Activated CD8-positive, alpha-beta T cell treated with anti-CD3 and anti-CD28 coated beads for 36 hours (primary cell): ENCODE measurements at regions of chr9 and their contacts with region 1.

Region 1: GRCh38 chr9:133406480-133407307 is 11.1 kb downstream of the REXO4 start:
- DNase-seq: peak; percentile 89
- ATAC-seq: peak; percentile 96
- H3K4me3 Mint-ChIP-seq: no peak overlapping the region
- H3K27ac Mint-ChIP-seq: peak overlapping the region; percentile 78
- H3K4me1 Mint-ChIP-seq: peaks cover 11% of the 10 kb centered on the region
- H3K27me3 Mint-ChIP-seq: no peaks in the 10 kb centered on the region
- CTCF ChIP-seq: peak; percentile 88

Region 2: GRCh38 chr9:133417541-133418461 is 11.1 kb after region 1 on chr9 and contains the start of gene REXO4:
- CTCF ChIA-PET with region 1: interaction called, 12 read pairs
- POLR2A ChIA-PET with region 1: interaction called, 7 read pairs
- intact Hi-C with region 1: no loop called
- DNase-seq: peak; percentile 89
- ATAC-seq: peak; percentile 78
- H3K4me3 Mint-ChIP-seq: peak within 1 kb of the TSS; percentile 93
- H3K27ac Mint-ChIP-seq: peak within 1 kb of the TSS; percentile 95
- H3K4me1 Mint-ChIP-seq: peaks cover 60% of the 10 kb centered on the region
- H3K27me3 Mint-ChIP-seq: no peaks in the 10 kb centered on the region
- CTCF ChIP-seq: no peak
- total RNA-seq, gene REXO4: 35.3 to 36.7 TPM

Region 3: GRCh38 chr9:133437753-133438531 is 31.2 kb after region 1 on chr9:
- CTCF ChIA-PET with region 1: no interaction called
- POLR2A ChIA-PET with region 1: no interaction called
- intact Hi-C with region 1: no loop called
- DNase-seq: no peak
- ATAC-seq: no peak
- H3K4me3 Mint-ChIP-seq: no peak overlapping the region
- H3K27ac Mint-ChIP-seq: no peak overlapping the region
- H3K4me1 Mint-ChIP-seq: peaks cover 5% of the 10 kb centered on the region
- H3K27me3 Mint-ChIP-seq: no peaks in the 10 kb centered on the region
- CTCF ChIP-seq: no peak

Region 4: DNA sequence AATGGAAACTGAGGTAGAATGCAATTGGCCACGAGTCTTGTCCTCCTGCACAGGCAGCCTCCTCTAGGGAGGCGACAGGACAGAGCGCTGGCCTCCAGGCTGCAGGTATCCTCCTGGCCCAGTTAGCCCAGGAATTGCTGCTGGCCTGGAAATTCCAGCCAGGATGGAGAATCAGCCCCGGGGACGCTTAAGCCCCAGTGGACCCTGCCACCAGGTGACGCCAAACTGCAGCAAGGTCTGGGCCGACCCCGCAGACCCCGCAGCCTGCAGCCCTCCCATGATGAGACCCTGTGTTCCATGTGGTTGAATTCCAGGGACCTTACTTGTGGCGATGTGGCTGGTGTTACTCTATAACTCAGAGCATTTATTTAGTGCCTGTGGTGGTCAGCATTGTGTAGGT is 60.4 kb after region 1 on chr9:
- CTCF ChIA-PET with region 1: no interaction called
- POLR2A ChIA-PET with region 1: no interaction called
- intact Hi-C with region 1: no loop called
- DNase-seq: no peak
- ATAC-seq: no peak
- H3K4me3 Mint-ChIP-seq: no peak overlapping the region
- H3K27ac Mint-ChIP-seq: no peak overlapping the region
- H3K4me1 Mint-ChIP-seq: no peaks in the 10 kb centered on the region
- H3K27me3 Mint-ChIP-seq: no peaks in the 10 kb centered on the region
- CTCF ChIP-seq: no peak

Region 5: GRCh38 chr9:133485361-133486260 is 78.9 kb after region 1 on chr9:
- CTCF ChIA-PET with region 1: interaction called, 8 read pairs
- POLR2A ChIA-PET with region 1: interaction called, 3 read pairs
- intact Hi-C with region 1: loop called (anchors 5 kb)
- DNase-seq: peak; percentile 55
- ATAC-seq: peak; percentile 77
- H3K4me3 Mint-ChIP-seq: peak overlapping the region; percentile 39
- H3K27ac Mint-ChIP-seq: peak overlapping the region; percentile 55
- H3K4me1 Mint-ChIP-seq: peaks cover 5% of the 10 kb centered on the region
- H3K27me3 Mint-ChIP-seq: no peaks in the 10 kb centered on the region
- CTCF ChIP-seq: no peak